OCI-LY7 (cell line): ENCODE measurements at regions of chr9 and their contacts with region 1.

Region 1: GRCh38 chr9:18626046-18626698 is 152.2 kb downstream of the ADAMTSL1 start:
- DNase-seq: no peak
- H3K4me3 ChIP-seq: no peak overlapping the region
- H3K27ac ChIP-seq: no peak overlapping the region
- H3K4me1 ChIP-seq: no peaks in the 10 kb centered on the region
- CTCF ChIP-seq: no peak

Region 2: DNA sequence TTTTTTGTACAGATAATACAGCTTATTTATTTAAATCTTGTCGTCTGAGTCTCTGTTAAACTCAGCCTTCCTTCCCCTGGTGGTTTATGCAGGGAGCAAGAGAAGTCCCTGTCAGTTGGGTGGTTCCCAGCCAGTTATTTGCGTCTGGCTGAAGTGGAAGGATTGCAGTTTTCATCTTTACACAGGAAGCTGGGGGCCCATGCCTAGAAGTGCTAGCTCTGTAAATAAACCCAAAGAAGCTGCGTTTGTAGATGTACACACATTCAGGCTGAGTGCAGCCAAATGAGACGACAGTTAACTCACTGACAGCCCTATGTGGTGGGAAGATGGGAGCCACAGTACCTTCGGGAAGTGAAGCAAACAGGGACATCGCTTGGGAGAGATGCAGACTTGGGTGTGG is 284.7 kb after region 1 on chr9:
- CTCF ChIA-PET with region 1: no interaction called
- POLR2A ChIA-PET with region 1: no interaction called
- intact Hi-C with region 1: loop called (anchors 10 kb)
- DNase-seq: no peak
- H3K4me3 ChIP-seq: no peak overlapping the region
- H3K27ac ChIP-seq: no peak overlapping the region
- H3K4me1 ChIP-seq: no peaks in the 10 kb centered on the region
- CTCF ChIP-seq: no peak